Heart left ventricle (tissue), 16 donors: ENCODE measurements at regions of chr3 and their contacts with region 1.

Region 1: DNA sequence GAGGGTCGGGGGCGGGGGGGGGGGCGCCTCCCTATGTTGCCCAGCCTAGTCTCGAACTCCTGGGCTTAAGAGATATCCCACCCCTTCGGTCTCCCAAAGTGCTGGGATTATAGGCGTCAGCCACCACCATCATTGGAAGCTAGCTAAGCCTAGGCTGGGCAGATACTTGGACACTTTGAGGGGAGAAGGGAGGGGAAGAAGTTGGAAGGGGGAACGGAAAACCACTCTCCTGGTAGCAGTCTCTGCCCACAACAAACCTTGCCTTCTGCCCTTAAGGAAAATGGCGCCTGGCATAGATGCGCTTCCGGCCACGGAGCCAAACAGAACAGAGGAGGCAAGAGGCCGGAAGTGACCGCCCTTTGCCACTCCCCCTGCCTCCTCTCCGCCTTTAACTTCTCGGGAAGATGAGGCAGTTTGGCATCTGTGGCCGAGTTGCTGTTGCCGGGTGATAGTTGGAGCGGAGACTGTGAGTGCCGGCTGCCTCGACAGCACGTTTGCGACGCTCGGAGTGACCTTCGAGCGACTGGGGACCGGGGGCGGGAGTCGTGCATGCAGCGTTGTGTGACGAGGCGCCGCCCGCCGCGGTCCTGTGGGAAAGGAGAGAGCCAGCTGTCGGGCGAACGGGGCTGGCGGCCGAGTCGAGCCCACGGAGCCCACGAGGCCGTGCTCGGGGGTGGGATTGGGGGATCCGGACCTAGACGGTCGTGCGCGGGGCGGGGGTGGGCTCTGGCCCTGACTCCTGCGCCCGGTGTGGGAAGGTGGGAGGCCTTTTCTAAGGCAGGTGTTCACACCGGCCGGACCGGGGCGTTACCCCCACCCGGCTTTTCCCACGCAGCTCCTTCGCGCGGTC is at the start of gene MFN1:
- DNase-seq: peak; percentile 95 to 97 (median 96)
- ATAC-seq: peak; percentile 97 to 100 (median 99)
- H3K4me3 ChIP-seq: peak within 1 kb of the TSS; percentile 67 to 93 (median 82)
- H3K27ac ChIP-seq: peak within 1 kb of the TSS; percentile 43 to 94 (median 88)
- H3K4me1 ChIP-seq: peaks cover 0 to 24% (median 8%) of the 10 kb centered on the region in 12 donors
- H3K27me3 ChIP-seq: no peaks in the 10 kb centered on the region
- CTCF ChIP-seq: no peak
- POLR2A ChIP-seq: peak in 1 of 2 donors; percentile 86
- total RNA-seq, gene MFN1: 28.5 to 78.0 (median 59.0) TPM

Region 2: DNA sequence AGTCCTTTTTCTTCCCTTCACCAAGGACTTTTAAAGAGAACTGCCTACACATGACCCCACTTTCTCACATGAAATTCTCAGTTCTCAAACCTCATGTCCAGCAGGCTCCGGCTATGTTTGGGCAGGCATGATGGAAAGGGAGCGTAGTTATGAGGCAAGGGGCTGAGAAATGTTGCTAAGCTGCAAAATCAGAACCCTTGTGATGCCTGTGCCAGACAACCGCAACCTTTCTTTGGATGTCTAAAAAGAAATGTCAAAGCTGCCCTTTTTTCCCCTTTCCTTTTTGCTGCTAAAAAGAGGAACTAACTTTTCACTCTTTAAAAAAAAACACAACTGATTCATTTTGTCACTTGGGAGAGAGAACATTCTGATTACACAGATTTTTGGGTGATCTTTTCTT is 84.5 kb after region 1 on chr3:
- intact Hi-C with region 1: no loop called
- DNase-seq: no peak
- ATAC-seq: peak in 3 of 4 donors; percentile 28 to 61 (median 58)
- H3K4me3 ChIP-seq: no peak overlapping the region
- H3K27ac ChIP-seq: peak overlapping the region in 2 of 12 donors; percentile 21 to 78
- H3K4me1 ChIP-seq: peaks cover 0 to 77% (median 29%) of the 10 kb centered on the region in 12 donors
- H3K27me3 ChIP-seq: no peaks in the 10 kb centered on the region
- CTCF ChIP-seq: no peak
- POLR2A ChIP-seq: no peak

Region 3: DNA sequence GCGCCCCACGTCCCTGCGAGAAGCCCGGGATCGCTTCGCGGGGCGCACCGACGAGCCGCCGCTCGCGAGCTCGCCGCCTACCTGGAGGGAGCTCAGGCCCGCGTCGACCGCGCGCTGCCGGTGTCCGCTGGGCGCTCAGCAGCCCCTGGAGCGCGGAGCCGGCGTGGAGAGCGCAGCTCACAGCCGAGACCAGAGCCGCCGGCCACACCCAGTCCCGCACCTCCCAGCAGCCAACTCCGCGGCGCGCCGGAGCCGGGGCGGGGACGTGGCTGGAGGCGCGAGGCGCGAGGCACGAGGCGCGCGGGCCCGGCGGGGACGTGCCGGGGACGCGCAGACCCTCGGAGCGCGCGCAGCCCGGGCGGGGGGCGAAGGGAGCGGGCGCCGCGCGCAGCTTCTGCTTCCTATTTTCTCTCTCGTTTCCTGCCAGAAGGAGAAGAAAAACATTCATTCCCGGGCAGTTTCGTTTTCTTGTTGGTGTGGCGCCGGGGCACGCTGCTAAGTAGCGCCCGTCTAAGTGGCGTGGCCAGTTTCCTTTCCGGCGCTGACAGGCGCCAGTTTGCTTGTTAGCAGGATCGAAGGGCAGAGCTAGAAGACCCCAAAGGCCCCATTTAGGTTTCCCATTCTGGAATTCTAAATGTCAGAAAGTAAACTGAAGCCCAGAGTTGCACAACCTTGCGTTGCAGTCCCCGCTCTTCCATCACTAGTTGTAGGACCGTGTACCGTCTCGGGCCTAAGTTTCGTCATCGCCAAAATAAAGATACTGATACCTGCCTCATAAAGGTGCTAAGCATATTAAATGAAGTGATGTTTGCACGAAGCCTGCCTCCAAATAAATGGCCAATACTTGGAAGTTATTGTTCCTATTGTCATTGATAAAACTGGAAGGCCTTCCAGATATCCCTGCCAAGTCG is 104.0 kb after region 1 on chr3 and contains the start of gene GNB4:
- intact Hi-C with region 1: loop called in 1 of 10 experiments (anchors 5 kb)
- DNase-seq: peak; percentile 87 to 91 (median 89)
- ATAC-seq: peak; percentile 78 to 96 (median 86)
- H3K4me3 ChIP-seq: peak within 1 kb of the TSS; percentile 43 to 86 (median 82)
- H3K27ac ChIP-seq: peak within 1 kb of the TSS; percentile 82 to 97 (median 94)
- H3K4me1 ChIP-seq: peaks cover 7 to 50% (median 30%) of the 10 kb centered on the region in 12 donors
- H3K27me3 ChIP-seq: no peaks in the 10 kb centered on the region
- CTCF ChIP-seq: no peak
- POLR2A ChIP-seq: peak in 1 of 2 donors; percentile 65
- total RNA-seq, gene GNB4: 7.2 to 75.1 (median 12.5) TPM